ENCODE measurements at regions of chr4 and their contacts with region 1.

Region 1: GRCh38 chr4:157220371-157220881 is at the start of gene GRIA2:
- DNase-seq: peak; percentile 66 to 86 (median 84)
- H3K4me3 ChIP-seq: peak within 1 kb of the TSS; percentile 60 to 89 (median 76)
- H3K27ac ChIP-seq: peak within 1 kb of the TSS; percentile 88 to 99 (median 97)
- H3K27me3 ChIP-seq: peaks cover 0 to 5% (median 0%) of the 10 kb centered on the region in 45 donors
- CTCF ChIP-seq: peak in 19 of 56 donors; percentile 2 to 40 (median 14)
- total RNA-seq, gene GRIA2: 216 to 613 (median 446) TPM

Region 2: GRCh38 chr4:157052429-157053040 is 167.9 kb before region 1 on chr4:
- intact Hi-C with region 1: no loop called
- DNase-seq: no peak
- H3K4me3 ChIP-seq: no peak overlapping the region
- H3K27ac ChIP-seq: no peak overlapping the region
- H3K27me3 ChIP-seq: no peaks in the 10 kb centered on the region
- CTCF ChIP-seq: no peak

Region 3: GRCh38 chr4:157075811-157076577 is 144.4 kb before region 1 on chr4 and contains the start of gene GLRB:
- intact Hi-C with region 1: loop called in 1 of 2 experiments (anchors 5 kb)
- DNase-seq: peak in 7 of 10 donors; percentile 10 to 70 (median 42)
- H3K4me3 ChIP-seq: peak within 1 kb of the TSS; percentile 43 to 89 (median 73)
- H3K27ac ChIP-seq: peak within 1 kb of the TSS in 47 of 59 donors; percentile 17 to 90 (median 71)
- H3K27me3 ChIP-seq: peaks cover 0 to 4% (median 0%) of the 10 kb centered on the region in 45 donors
- CTCF ChIP-seq: no peak
- total RNA-seq, gene GLRB: 28.5 to 141 (median 96.7) TPM

Region 4: DNA sequence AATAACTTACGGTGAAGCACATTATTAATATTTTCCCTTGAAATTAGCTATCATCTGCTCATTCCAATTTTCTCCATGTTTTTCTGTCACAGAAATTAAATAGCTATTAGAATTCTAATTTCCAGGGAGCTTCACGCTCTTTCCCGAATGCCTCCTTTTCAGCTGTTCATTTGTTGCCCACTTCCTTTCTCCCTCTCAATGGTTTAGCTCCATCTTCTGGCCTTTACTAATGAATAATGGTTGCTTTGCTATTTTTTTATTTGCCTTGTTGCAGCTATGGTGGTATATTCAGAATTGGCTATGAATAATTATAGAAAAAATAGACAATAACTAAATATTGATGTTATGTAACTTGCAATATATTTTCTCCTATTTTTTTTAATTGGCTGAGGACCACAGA is 70.6 kb after region 1 on chr4:
- intact Hi-C with region 1: loop called (anchors 5 kb)
- DNase-seq: no peak
- H3K4me3 ChIP-seq: peak overlapping the region in 38 of 59 donors; percentile 2 to 49 (median 26)
- H3K27ac ChIP-seq: peak overlapping the region in 5 of 59 donors; percentile 6 to 39 (median 24)
- H3K27me3 ChIP-seq: no peaks in the 10 kb centered on the region
- CTCF ChIP-seq: peak in 54 of 56 donors; percentile 24 to 72 (median 50)

Region 5: GRCh38 chr4:157978680-157979361 is 758.4 kb after region 1 on chr4:
- intact Hi-C with region 1: loop called (anchors 5 kb)
- DNase-seq: peak; percentile 33 to 77 (median 60)
- H3K4me3 ChIP-seq: peak overlapping the region in 55 of 59 donors; percentile 3 to 60 (median 41)
- H3K27ac ChIP-seq: peak overlapping the region in 30 of 59 donors; percentile 3 to 84 (median 42)
- H3K27me3 ChIP-seq: no peaks in the 10 kb centered on the region
- CTCF ChIP-seq: peak; percentile 60 to 95 (median 86)

Region 6: GRCh38 chr4:158161551-158162354 is 941.3 kb after region 1 on chr4:
- intact Hi-C with region 1: loop called in 1 of 2 experiments (anchors 10 kb)
- DNase-seq: no peak
- H3K4me3 ChIP-seq: no peak overlapping the region
- H3K27ac ChIP-seq: peak overlapping the region in 51 of 59 donors; percentile 4 to 88 (median 53)
- H3K27me3 ChIP-seq: no peaks in the 10 kb centered on the region
- CTCF ChIP-seq: no peak

Region 7: GRCh38 chr4:158172261-158173258 is 952.1 kb after region 1 on chr4 and contains the start of gene GASK1B:
- intact Hi-C with region 1: loop called (anchors 10 kb)
- DNase-seq: peak in 2 of 10 donors; percentile 33 to 61
- H3K4me3 ChIP-seq: peak within 1 kb of the TSS; percentile 30 to 70 (median 53)
- H3K27ac ChIP-seq: peak within 1 kb of the TSS in 57 of 59 donors; percentile 6 to 88 (median 76)
- H3K27me3 ChIP-seq: no peaks in the 10 kb centered on the region
- CTCF ChIP-seq: peak; percentile 57 to 94 (median 77)
- total RNA-seq, gene GASK1B: 23.9 to 74.1 (median 43.0) TPM